ENCODE measurements at regions of chr22 and their contacts with region 1.

Region 1: DNA sequence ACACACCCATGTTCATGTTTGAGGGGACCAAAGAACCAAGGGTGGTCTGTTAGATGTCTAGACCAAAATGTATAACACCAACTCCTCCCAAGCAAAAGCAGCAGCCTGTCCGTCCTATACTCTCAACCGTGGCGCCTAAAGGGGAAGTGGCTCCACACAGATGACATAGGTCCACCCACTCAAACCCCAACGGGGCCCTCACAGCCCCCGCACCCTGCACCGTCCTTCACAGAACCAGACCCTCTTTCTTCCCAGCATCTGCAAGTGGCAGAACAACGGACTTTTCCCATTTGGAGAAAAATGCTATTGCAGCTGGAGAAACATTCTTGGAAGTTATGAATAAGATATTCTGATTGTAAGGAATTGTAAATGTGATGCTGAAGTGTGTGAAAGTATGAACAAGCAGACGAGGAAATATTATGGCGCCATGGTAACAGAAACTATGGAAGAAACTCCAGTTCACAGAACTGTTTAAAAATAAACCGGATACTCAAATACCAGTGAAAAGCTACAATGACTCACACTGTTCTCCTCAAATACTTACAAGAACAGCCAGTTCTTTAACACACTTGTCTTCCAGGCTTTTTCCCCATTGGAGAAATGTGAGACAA is 76.5 kb upstream of the ARFGAP3 start:
- DNase-seq: no peak
- H3K4me3 ChIP-seq: no peak overlapping the region
- H3K27ac ChIP-seq: peak overlapping the region; percentile 82 to 92 (median 88)
- H3K4me1 ChIP-seq: peaks cover 63 to 94% (median 82%) of the 10 kb centered on the region in 4 donors
- H3K27me3 ChIP-seq: no peaks in the 10 kb centered on the region
- CTCF ChIP-seq: no peak
- EP300 ChIP-seq: peak; percentile 69
- POLR2A ChIP-seq: no peak

Region 2: GRCh38 chr22:42978453-42979103 is 45.0 kb after region 1 on chr22:
- in situ Hi-C with region 1: no loop called
- intact Hi-C with region 1: no loop called
- DNase-seq: no peak
- H3K4me3 ChIP-seq: no peak overlapping the region
- H3K27ac ChIP-seq: peak overlapping the region; percentile 27 to 61 (median 47)
- H3K4me1 ChIP-seq: peaks cover 28 to 64% (median 42%) of the 10 kb centered on the region in 4 donors
- H3K27me3 ChIP-seq: no peaks in the 10 kb centered on the region
- CTCF ChIP-seq: no peak
- EP300 ChIP-seq: no peak
- POLR2A ChIP-seq: no peak

Region 3: GRCh38 chr22:42994881-42995562 is 61.4 kb after region 1 on chr22:
- in situ Hi-C with region 1: no loop called
- intact Hi-C with region 1: loop called (anchors 10 kb)
- DNase-seq: peak; percentile 75
- H3K4me3 ChIP-seq: peak overlapping the region in 3 of 4 donors; percentile 8 to 40 (median 17)
- H3K27ac ChIP-seq: peak overlapping the region; percentile 93 to 95 (median 94)
- H3K4me1 ChIP-seq: peaks cover 37 to 87% (median 77%) of the 10 kb centered on the region in 4 donors
- H3K27me3 ChIP-seq: no peaks in the 10 kb centered on the region
- CTCF ChIP-seq: no peak
- EP300 ChIP-seq: peak; percentile 44
- POLR2A ChIP-seq: peak; percentile 88